K562 (cell line): ENCODE measurements at regions of chrX and their contacts with region 1.

Region 1: DNA sequence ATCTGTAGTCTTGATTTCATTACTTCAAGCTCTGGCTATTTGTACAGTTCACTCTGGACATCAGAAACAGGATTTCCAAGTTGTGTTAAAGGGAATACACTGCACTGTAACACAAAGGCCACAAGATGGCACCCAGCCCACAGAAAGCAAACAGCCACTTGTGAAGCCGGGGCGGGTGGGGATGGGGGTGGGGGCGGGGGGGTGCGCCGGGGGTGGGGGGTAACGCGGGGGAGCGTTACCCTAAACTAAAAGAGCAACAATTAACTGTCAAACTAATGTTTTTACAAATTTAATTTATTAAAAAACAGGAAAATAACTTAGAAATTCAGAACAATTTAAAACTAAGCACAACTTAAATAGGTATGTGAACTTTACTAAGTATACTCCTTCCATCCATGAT is 27.3 kb downstream of the PRDX4 start:
- DNase-seq: peak; percentile 47 to 78 (median 58)
- ATAC-seq: peak; percentile 91
- H3K4me3 ChIP-seq: no peak overlapping the region
- H3K27ac ChIP-seq: no peak overlapping the region
- H3K4me1 ChIP-seq: peaks cover 0 to 4% of the 10 kb centered on the region in 2 experiments; a peak in 3 of 5 replicates
- H3K27me3 ChIP-seq: no peaks in the 10 kb centered on the region
- CTCF ChIP-seq: peak in 2 of 3 experiments; percentile 67 to 72; a peak in 4 of 6 replicates
- EP300 ChIP-seq: no peak
- POLR2A ChIP-seq: no peak
- RAD21 ChIP-seq: peak in 1 of 2 experiments; percentile 58; a peak in 2 of 4 replicates

Region 2: DNA sequence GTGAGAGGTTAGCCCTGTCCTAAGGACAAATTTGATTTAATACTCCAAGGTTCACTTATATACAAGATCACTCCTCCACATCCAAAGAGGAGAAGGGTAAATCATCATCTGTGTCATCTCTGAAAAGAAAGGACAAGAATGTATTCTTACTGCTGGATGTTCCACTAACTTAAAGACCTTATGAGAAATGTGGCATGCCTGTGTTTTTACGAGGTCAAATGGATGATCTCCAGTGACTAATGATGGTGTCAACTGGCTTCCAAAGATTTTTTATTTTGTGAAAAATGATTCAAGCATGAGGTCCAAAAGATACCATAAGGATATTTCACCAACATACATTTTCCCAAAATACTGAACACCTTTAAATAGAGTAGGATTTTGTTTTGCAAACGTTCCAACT is 216.6 kb before region 1 on chrX:
- CTCF ChIA-PET with region 1: no interaction called
- POLR2A ChIA-PET with region 1: no interaction called
- in situ Hi-C with region 1: no loop called
- intact Hi-C with region 1: no loop called
- DNase-seq: no peak
- ATAC-seq: no peak
- H3K4me3 ChIP-seq: no peak overlapping the region
- H3K27ac ChIP-seq: no peak overlapping the region
- H3K4me1 ChIP-seq: no peaks in the 10 kb centered on the region
- H3K27me3 ChIP-seq: no peaks in the 10 kb centered on the region
- CTCF ChIP-seq: no peak
- EP300 ChIP-seq: no peak
- POLR2A ChIP-seq: no peak
- RAD21 ChIP-seq: no peak

Region 3: GRCh38 chrX:24054182-24055042 is 359.8 kb after region 1 on chrX and contains the start of gene EIF2S3:
- CTCF ChIA-PET with region 1: no interaction called
- POLR2A ChIA-PET with region 1: no interaction called
- in situ Hi-C with region 1: loop called (anchors 10 kb)
- intact Hi-C with region 1: loop called (anchors 10 kb)
- DNase-seq: peak; percentile 79 to 95 (median 82)
- ATAC-seq: peak; percentile 95
- H3K4me3 ChIP-seq: no peak within 1 kb of the TSS
- H3K27ac ChIP-seq: no peak within 1 kb of the TSS; the same call in 1 of the 3 replicates
- H3K4me1 ChIP-seq: peaks cover 4 to 6% of the 10 kb centered on the region in 2 experiments; a peak in 2 of 5 replicates
- H3K27me3 ChIP-seq: no peaks in the 10 kb centered on the region
- CTCF ChIP-seq: peak; percentile 87 to 88 (median 88)
- EP300 ChIP-seq: peak; percentile 20; the same call in 1 of the 2 replicates
- POLR2A ChIP-seq: peak; percentile 94
- RAD21 ChIP-seq: peak; percentile 51 to 63
- polyA plus RNA-seq, gene EIF2S3: 148 to 192 TPM